ENCODE measurements at regions of chr6 and their contacts with region 1.

Region 1: DNA sequence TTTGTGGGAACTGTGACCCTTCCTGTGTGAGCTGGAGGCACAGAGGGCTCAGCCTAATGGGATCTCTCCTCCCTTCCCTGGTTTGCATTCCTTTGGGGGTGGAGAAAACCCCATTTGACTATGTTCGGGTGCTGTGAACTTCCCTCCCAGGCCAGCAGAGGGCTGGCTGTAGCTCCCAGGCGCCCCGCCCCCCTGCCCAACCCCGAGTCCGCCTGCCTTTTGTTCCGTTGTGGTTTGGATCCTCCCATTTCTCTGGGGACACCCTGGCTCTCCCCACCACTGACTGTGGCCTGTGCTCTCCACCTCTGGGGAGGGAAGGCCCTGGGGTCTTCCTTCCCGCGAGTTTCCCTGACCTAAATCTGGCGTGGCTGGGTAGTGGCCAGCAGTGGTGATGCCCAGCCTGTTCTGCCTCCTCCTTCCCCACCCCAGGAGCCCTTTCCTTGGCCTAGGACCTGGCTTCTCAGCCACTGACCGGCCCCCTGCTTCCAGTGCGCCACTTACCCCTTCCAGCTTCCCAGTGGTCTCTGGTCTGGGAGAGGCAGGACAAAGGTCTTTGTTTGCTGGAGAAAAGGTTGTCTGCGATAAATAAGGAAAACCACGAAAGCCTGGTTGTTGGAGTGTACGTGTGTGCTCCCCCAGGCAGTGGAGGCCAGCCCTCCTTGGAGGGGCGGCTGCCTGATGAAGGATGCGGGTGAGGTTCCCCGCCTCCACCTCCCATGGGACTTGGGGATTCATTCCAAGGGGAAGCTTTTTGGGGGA is 4.9 kb downstream of the VEGFA start:
- DNase-seq: peak; percentile 79
- ATAC-seq: peak; percentile 18
- H3K4me3 Mint-ChIP-seq: peak overlapping the region; percentile 97
- H3K27ac Mint-ChIP-seq: no peak overlapping the region
- H3K4me1 Mint-ChIP-seq: peaks cover 42% of the 10 kb centered on the region
- H3K27me3 Mint-ChIP-seq: peaks cover 2% of the 10 kb centered on the region
- CTCF ChIP-seq: peak; percentile 81

Region 2: GRCh38 chr6:43723737-43724295 is 51.1 kb before region 1 on chr6:
- CTCF ChIA-PET with region 1: interaction called, 69 read pairs
- POLR2A ChIA-PET with region 1: interaction called, 26 read pairs
- intact Hi-C with region 1: loop called (anchors 5 kb)
- DNase-seq: peak; percentile 89
- ATAC-seq: peak; percentile 76
- H3K4me3 Mint-ChIP-seq: peak overlapping the region; percentile 52
- H3K27ac Mint-ChIP-seq: peak overlapping the region; percentile 91
- H3K4me1 Mint-ChIP-seq: peaks cover 35% of the 10 kb centered on the region
- H3K27me3 Mint-ChIP-seq: no peaks in the 10 kb centered on the region
- CTCF ChIP-seq: peak; percentile 71

Region 3: DNA sequence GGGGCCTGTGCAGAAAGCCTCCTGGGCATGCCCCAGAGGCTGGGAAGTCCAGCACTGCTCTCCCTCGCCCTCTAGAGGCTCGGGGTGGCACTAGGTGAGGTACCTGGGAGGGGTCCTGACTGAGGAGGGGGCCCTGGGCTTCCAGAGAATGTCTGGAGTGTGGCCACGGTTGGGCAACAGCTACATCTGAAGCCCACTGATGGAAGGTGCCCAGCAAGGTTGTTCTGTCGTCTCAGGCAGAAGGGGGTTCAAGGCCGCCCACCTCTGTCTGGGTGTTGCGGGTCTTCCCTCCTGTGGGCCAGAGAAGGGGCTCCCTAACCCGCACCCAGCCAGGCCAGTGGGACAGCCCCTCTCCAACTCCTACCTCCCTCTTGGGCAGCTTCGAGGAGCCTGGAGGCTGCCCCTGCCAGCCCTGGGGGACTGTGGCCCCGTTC is 16.3 kb before region 1 on chr6:
- CTCF ChIA-PET with region 1: interaction called, 33 read pairs
- POLR2A ChIA-PET with region 1: interaction called, 6 read pairs
- intact Hi-C with region 1: no loop called
- DNase-seq: peak; percentile 49
- ATAC-seq: peak; percentile 79
- H3K4me3 Mint-ChIP-seq: no peak overlapping the region
- H3K27ac Mint-ChIP-seq: no peak overlapping the region
- H3K4me1 Mint-ChIP-seq: peaks cover 3% of the 10 kb centered on the region
- H3K27me3 Mint-ChIP-seq: no peaks in the 10 kb centered on the region
- CTCF ChIP-seq: peak; percentile 78

Region 4: GRCh38 chr6:44655412-44656342 is 880.7 kb after region 1 on chr6:
- CTCF ChIA-PET with region 1: no interaction called
- POLR2A ChIA-PET with region 1: no interaction called
- intact Hi-C with region 1: no loop called
- DNase-seq: peak; percentile 84
- ATAC-seq: peak; percentile 94
- H3K4me3 Mint-ChIP-seq: no peak overlapping the region
- H3K27ac Mint-ChIP-seq: peak overlapping the region; percentile 67
- H3K4me1 Mint-ChIP-seq: peaks cover 7% of the 10 kb centered on the region
- H3K27me3 Mint-ChIP-seq: peaks cover 3% of the 10 kb centered on the region
- CTCF ChIP-seq: peak; percentile 95

Measured in activated CD8-positive, alpha-beta T cell treated with anti-CD3 and anti-CD28 coated beads for 36 hours (primary cell).